Psoas muscle (tissue), 8 donors: ENCODE measurements at regions of chr19 and their contacts with region 1.

Region 1: GRCh38 chr19:20661150-20661819 is at the start of gene ZNF626:
- DNase-seq: peak; percentile 96 to 97
- ATAC-seq: peak; percentile 97 to 99 (median 98)
- H3K4me3 ChIP-seq: peak within 1 kb of the TSS; percentile 88
- H3K27ac ChIP-seq: peak within 1 kb of the TSS; percentile 95
- H3K4me1 ChIP-seq: peaks cover 24% of the 10 kb centered on the region
- H3K27me3 ChIP-seq: no peaks in the 10 kb centered on the region
- CTCF ChIP-seq: no peak
- total RNA-seq, gene ZNF626: 7.5 to 12.7 (median 8.2) TPM

Region 2: GRCh38 chr19:20359933-20360720 is 301.2 kb before region 1 on chr19:
- intact Hi-C with region 1: no loop called
- DNase-seq: no peak
- ATAC-seq: no peak
- H3K4me3 ChIP-seq: no peak overlapping the region
- H3K27ac ChIP-seq: no peak overlapping the region
- H3K4me1 ChIP-seq: no peaks in the 10 kb centered on the region
- H3K27me3 ChIP-seq: no peaks in the 10 kb centered on the region
- CTCF ChIP-seq: no peak

Region 3: GRCh38 chr19:20470345-20471134 is 190.7 kb before region 1 on chr19:
- intact Hi-C with region 1: no loop called
- DNase-seq: no peak
- ATAC-seq: no peak
- H3K4me3 ChIP-seq: no peak overlapping the region
- H3K27ac ChIP-seq: no peak overlapping the region
- H3K4me1 ChIP-seq: no peaks in the 10 kb centered on the region
- H3K27me3 ChIP-seq: no peaks in the 10 kb centered on the region
- CTCF ChIP-seq: no peak

Region 4: DNA sequence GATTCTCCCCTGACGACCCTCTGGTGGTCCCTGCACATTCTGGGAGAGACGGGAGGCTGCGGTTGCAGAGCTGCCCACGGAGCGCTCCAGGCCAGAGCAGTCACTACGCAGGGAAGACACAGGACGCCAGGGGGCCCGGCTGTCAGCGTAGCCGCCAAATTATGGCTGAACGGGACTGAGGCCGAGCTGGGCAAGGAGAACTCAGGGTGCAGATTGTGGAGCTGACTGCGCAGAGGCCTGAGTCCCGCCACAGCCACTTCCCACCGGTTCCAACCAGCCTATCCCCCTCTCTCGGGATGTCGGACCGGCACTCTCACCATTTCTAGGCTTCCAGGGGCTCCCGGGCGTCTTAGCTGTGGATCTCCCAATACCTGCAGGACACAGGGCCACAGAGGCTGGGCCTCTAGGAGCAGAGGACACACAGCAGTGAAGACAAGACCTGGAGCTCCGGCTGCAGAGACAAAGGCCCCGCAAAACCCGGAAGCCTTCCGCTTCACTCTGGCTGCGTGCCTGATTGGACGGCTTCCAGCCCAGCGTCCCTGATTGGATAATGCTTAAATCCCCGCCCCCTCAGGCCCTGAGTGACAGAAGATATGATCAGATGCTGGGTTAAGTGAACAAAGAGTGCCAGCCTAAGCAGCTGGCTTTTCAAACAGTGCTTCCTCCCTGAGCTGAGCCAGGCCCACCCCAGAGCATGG is 95.8 kb before region 1 on chr19 and contains the start of gene ZNF737:
- intact Hi-C with region 1: loop called in 1 of 2 experiments (anchors 2 kb)
- DNase-seq: peak; percentile 95 to 97
- ATAC-seq: peak; percentile 96 to 99 (median 98)
- H3K4me3 ChIP-seq: peak within 1 kb of the TSS; percentile 92
- H3K27ac ChIP-seq: peak within 1 kb of the TSS; percentile 72
- H3K4me1 ChIP-seq: peaks cover 8% of the 10 kb centered on the region
- H3K27me3 ChIP-seq: no peaks in the 10 kb centered on the region
- CTCF ChIP-seq: peak; percentile 46
- total RNA-seq, gene ZNF737: 2.2 to 4.3 (median 2.8) TPM

Region 5: DNA sequence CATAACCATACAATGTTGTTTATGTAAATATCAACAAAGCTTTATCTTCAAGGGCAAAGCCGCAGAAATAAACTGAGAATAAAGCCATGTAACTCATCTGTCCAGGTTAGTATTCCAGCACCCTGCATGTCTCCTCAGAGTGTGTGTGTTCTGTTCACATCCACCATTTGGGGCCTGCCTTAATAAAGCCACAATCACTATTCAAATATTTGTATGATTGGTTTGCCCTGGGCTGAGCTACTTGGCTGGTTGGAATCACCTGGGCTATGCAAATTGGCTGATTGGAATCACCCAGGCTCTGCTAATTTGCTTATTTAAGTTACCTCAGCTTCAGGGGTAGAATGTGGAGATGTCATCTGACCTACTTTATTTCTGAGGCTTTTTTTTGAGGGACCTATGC is 53.3 kb before region 1 on chr19:
- intact Hi-C with region 1: no loop called
- DNase-seq: no peak
- ATAC-seq: no peak
- H3K4me3 ChIP-seq: no peak overlapping the region
- H3K27ac ChIP-seq: no peak overlapping the region
- H3K4me1 ChIP-seq: no peaks in the 10 kb centered on the region
- H3K27me3 ChIP-seq: no peaks in the 10 kb centered on the region
- CTCF ChIP-seq: no peak

Region 6: GRCh38 chr19:20776083-20777076 is 115.1 kb after region 1 on chr19 and contains the start of gene ZNF66:
- intact Hi-C with region 1: loop called in 1 of 2 experiments (anchors 10 kb)
- DNase-seq: peak; percentile 95 to 97
- ATAC-seq: peak; percentile 100
- H3K4me3 ChIP-seq: peak within 1 kb of the TSS; percentile 93
- H3K27ac ChIP-seq: no peak within 1 kb of the TSS
- H3K4me1 ChIP-seq: no peaks in the 10 kb centered on the region
- H3K27me3 ChIP-seq: no peaks in the 10 kb centered on the region
- CTCF ChIP-seq: no peak
- total RNA-seq, gene ZNF66: 0.39 to 1.1 (median 0.64) TPM